AG04450 (cell line): ENCODE measurements at regions of chr13 and their contacts with region 1.

Region 1: GRCh38 chr13:100542826-100543156 is 45.8 kb downstream of the GGACT start:
- DNase-seq: no peak
- H3K4me3 ChIP-seq: no peak overlapping the region
- H3K27ac ChIP-seq: no peak overlapping the region
- H3K27me3 ChIP-seq: no peaks in the 10 kb centered on the region
- CTCF ChIP-seq: peak; percentile 70

Region 2: DNA sequence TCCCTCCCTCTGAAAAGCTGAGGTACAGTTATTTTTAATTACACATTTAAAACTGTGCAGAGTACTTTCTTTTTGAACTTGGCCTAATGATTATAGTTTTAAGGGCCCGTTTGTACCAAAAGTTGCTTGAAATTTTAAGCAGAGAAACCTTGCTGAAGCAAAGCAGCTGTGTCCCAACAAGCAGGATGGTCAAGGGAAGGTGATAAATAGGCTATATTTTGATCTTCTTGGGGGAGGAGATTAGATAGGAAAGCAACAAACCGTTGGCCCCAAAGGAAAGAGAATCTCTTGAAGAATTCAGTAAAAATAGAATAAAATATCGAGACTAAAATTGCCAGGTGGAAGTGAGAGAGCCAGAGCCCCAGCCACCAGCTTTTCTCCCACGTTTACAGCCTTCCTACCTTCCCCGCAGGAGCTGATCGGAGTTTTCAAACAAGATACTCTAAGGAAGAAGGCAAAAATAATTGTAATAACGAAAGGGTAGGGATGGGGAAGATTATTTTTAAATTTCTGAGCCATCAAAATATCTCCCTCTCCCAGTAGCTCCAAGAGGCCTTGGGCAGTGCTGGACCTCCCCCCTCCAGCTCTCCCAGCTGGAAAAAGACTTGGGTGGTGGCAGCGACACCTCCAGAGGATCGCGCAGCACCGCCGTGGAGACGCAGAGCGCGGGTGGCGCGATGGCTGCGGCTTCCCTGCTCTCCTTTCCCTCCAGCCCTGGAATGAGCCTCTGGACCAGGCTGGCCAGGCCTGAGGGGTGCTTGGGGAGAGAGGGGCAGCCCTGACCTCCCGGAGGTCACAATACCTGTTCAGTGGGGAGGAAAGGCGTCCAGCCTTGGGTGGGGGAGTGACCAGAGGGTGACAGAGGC is 555.4 kb before region 1 on chr13:
- CTCF ChIA-PET with region 1: no interaction called
- POLR2A ChIA-PET with region 1: interaction called, 13 read pairs
- DNase-seq: no peak
- H3K4me3 ChIP-seq: no peak overlapping the region
- H3K27ac ChIP-seq: no peak overlapping the region
- H3K27me3 ChIP-seq: peaks cover 96% of the 10 kb centered on the region
- CTCF ChIP-seq: no peak

Region 3: DNA sequence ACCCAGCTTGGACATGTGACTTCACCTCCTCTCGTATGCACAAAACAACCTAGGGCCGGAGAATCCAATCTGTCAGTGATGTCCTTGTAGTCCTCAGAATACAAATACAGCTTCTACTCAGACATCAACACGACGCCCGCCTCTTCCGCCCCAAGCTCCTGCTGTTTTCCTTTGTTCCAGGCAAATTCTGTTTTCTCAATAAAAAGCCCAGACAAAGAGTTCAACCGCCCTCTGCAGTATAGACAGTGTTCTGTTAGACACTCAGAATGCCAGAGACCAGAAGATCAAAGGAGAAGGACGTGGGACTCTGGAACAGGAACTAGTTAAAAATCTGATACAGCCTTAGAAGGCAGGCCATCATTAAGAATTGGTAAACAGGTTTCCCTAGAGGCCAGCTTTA is 87.8 kb after region 1 on chr13:
- CTCF ChIA-PET with region 1: no interaction called
- POLR2A ChIA-PET with region 1: no interaction called
- DNase-seq: no peak
- H3K4me3 ChIP-seq: no peak overlapping the region
- H3K27ac ChIP-seq: no peak overlapping the region
- H3K27me3 ChIP-seq: no peaks in the 10 kb centered on the region
- CTCF ChIP-seq: 0 out of 2 replicates have a peak, but pooled peaks have one; percentile 3

Region 4: GRCh38 chr13:101144808-101145419 is 602.1 kb after region 1 on chr13:
- CTCF ChIA-PET with region 1: no interaction called
- POLR2A ChIA-PET with region 1: no interaction called
- DNase-seq: peak; percentile 29
- H3K4me3 ChIP-seq: no peak overlapping the region
- H3K27ac ChIP-seq: no peak overlapping the region
- H3K27me3 ChIP-seq: peaks cover 1% of the 10 kb centered on the region
- CTCF ChIP-seq: peak; percentile 67